H1 (cell line): ENCODE measurements at regions of chr5 and their contacts with region 1.

Region 1: GRCh38 chr5:34898258-34898895 is 16.9 kb downstream of the RAD1 start:
- DNase-seq: peak; percentile 10 to 61
- H3K4me3 ChIP-seq: no peak overlapping the region
- H3K27ac ChIP-seq: no peak overlapping the region
- H3K4me1 ChIP-seq: peaks cover 0 to 11% (median 0%) of the 10 kb centered on the region in 4 experiments; a peak in 1 of 7 replicates
- H3K27me3 ChIP-seq: no peaks in the 10 kb centered on the region
- CTCF ChIP-seq: peak; percentile 79 to 85 (median 81)
- EP300 ChIP-seq: no peak
- POLR2A ChIP-seq: no peak
- RAD21 ChIP-seq: peak; percentile 91 to 95

Region 2: DNA sequence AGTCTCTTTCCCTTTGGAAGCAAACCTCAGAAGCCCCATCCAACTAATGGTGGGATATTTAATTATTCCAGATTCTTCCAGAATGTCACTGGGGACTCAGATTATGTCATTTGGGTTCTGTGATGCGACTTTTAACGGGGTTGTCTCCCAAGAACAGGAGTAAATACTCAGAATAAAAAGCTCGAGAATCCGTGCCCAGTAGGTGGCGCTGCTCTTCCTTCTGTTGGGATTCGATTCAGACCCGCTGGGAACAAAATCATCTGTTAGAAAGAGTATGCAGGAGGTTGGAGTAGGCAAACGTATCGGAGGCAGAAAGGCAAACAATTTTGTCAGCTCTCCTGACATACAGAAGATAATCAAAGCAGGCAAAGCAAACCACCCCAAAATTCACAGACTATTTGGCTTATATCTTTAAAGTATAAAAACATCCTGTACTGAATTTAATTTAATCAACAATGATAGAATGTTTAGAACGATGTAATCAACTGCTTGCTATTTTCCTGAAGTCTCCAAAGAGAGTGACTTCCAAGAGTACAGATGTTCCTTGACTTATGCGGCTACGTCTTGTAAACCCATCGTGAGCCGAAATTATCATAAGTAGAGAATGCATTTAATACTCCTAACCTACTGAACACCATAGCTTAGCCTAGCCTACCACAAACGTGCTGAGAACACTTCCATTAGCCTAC is 412.1 kb before region 1 on chr5:
- CTCF ChIA-PET with region 1: interaction called, 44 read pairs
- POLR2A ChIA-PET with region 1: interaction called, 3 read pairs
- DNase-seq: peak in 1 of 2 experiments; percentile 90
- H3K4me3 ChIP-seq: no peak overlapping the region
- H3K27ac ChIP-seq: no peak overlapping the region
- H3K4me1 ChIP-seq: peaks cover 6 to 26% (median 16%) of the 10 kb centered on the region in 4 experiments; a peak in 6 of 7 replicates
- H3K27me3 ChIP-seq: no peaks in the 10 kb centered on the region
- CTCF ChIP-seq: peak; percentile 59 to 84 (median 77)
- EP300 ChIP-seq: 0 out of 3 replicates have a peak, but pooled peaks of 1 of the 2 experiments have one; percentile 26
- POLR2A ChIP-seq: no peak
- RAD21 ChIP-seq: peak; percentile 93 to 97

Region 3: GRCh38 chr5:34771064-34771463 is 127.3 kb before region 1 on chr5:
- CTCF ChIA-PET with region 1: no interaction called
- POLR2A ChIA-PET with region 1: no interaction called
- DNase-seq: no peak
- H3K4me3 ChIP-seq: no peak overlapping the region
- H3K27ac ChIP-seq: no peak overlapping the region
- H3K4me1 ChIP-seq: no peaks in the 10 kb centered on the region
- H3K27me3 ChIP-seq: no peaks in the 10 kb centered on the region
- CTCF ChIP-seq: no peak
- EP300 ChIP-seq: no peak
- POLR2A ChIP-seq: no peak
- RAD21 ChIP-seq: no peak

Region 4: DNA sequence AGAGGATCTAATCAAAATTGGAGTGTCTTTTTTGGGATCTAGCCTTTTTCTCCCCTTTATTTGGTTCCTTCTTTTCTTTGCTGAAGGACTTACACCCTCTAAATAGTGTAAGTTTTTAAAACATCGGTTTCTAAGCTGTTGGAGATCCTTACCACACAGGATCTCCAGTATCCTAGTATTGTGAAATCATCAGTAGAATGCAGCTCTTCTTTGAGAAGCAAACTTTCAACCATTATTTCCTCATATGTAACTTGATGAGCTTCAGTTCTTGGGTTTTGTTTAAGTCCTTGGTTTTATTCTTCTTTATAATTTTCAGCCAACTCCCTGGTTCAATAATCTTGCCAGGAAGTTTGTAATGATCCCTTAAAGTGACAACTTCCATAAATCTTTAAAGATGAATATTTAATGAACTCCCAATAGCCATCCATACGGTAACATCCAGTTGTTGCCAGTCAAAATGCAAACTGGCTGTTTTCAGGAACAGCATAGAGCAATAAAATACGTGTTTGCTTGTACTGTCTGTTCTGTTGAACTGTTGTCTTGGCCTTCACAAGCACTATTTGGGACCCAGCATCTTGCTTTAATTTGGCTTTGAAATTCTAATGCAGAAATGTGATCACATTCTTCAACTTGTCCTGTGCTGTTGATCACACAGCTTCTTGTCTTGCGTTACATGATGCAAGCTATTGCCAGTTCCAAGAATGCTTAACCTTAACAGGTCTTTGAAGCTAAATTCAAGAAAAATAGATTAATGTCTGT is 94.2 kb before region 1 on chr5:
- CTCF ChIA-PET with region 1: interaction called, 12 read pairs
- POLR2A ChIA-PET with region 1: no interaction called
- DNase-seq: no peak
- H3K4me3 ChIP-seq: no peak overlapping the region
- H3K27ac ChIP-seq: no peak overlapping the region
- H3K4me1 ChIP-seq: peaks cover 4 to 13% (median 6%) of the 10 kb centered on the region in 4 experiments; a peak in 5 of 7 replicates
- H3K27me3 ChIP-seq: no peaks in the 10 kb centered on the region
- CTCF ChIP-seq: no peak
- EP300 ChIP-seq: no peak
- POLR2A ChIP-seq: no peak
- RAD21 ChIP-seq: no peak

Region 5: DNA sequence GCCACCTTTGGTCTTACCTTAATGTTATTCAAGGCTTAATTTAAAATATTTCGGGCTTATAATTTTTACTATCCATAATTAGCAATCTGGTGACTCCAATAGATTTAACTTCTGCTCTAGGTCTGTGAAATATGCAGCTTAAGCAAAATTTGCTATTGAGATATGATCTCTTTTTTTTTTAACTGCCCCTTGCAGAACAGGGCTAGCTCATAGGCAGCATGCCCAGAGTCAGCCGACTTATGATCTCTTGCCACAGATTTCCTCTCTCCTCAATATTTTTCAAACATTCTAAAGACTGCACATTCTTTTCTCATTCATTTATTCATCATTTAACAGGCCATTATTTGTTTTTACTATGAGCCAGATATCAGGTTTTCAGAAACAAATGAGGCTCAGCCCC is 54.9 kb before region 1 on chr5:
- CTCF ChIA-PET with region 1: interaction called, 11 read pairs
- POLR2A ChIA-PET with region 1: interaction called, 8 read pairs
- DNase-seq: no peak
- H3K4me3 ChIP-seq: no peak overlapping the region
- H3K27ac ChIP-seq: no peak overlapping the region
- H3K4me1 ChIP-seq: no peaks in the 10 kb centered on the region; a peak in 1 of 7 replicates
- H3K27me3 ChIP-seq: no peaks in the 10 kb centered on the region; a peak in 1 of 7 replicates
- CTCF ChIP-seq: no peak
- EP300 ChIP-seq: no peak
- POLR2A ChIP-seq: no peak
- RAD21 ChIP-seq: no peak

Region 6: GRCh38 chr5:34915139-34915855 is 16.9 kb after region 1 on chr5 and contains the starts of genes BRIX1 and RAD1:
- CTCF ChIA-PET with region 1: interaction called, 24 read pairs
- POLR2A ChIA-PET with region 1: interaction called, 52 read pairs
- DNase-seq: peak; percentile 89 to 91
- H3K4me3 ChIP-seq: peak within 1 kb of the TSS; percentile 86 to 100 (median 96)
- H3K27ac ChIP-seq: peak within 1 kb of the TSS; percentile 95
- H3K4me1 ChIP-seq: peaks cover 0 to 3% (median under 1%) of the 10 kb centered on the region in 4 experiments; a peak in 1 of 7 replicates
- H3K27me3 ChIP-seq: no peaks in the 10 kb centered on the region
- CTCF ChIP-seq: peak in 1 of 3 experiments; percentile 8; a peak in 1 of 4 replicates
- EP300 ChIP-seq: 0 out of 3 replicates have a peak, but pooled peaks of 1 of the 2 experiments have one; percentile 59
- POLR2A ChIP-seq: peak; percentile 89 to 90
- RAD21 ChIP-seq: 0 out of 4 replicates have a peak, but pooled peaks of 1 of the 2 experiments have one; percentile 7
- total RNA-seq, gene BRIX1: 64.5 and 71.7 TPM in 2 replicates
- total RNA-seq, gene RAD1: 37.3 and 40.5 TPM in 2 replicates